CD4-positive, alpha-beta memory T cell (primary cell): ENCODE measurements at regions of chr4 and their contacts with region 1.

Region 1: GRCh38 chr4:112145326-112145819 is at the start of gene FAM241A:
- DNase-seq: peak; percentile 86 to 89 (median 86)
- H3K4me3 ChIP-seq: peak within 1 kb of the TSS; percentile 82 to 88
- H3K4me3 Mint-ChIP-seq: peak within 1 kb of the TSS; percentile 87 to 99 (median 94)
- H3K27ac ChIP-seq: peak within 1 kb of the TSS; percentile 82
- H3K27ac Mint-ChIP-seq: peak within 1 kb of the TSS; percentile 85 to 99 (median 96)
- H3K4me1 ChIP-seq: peaks cover 29% of the 10 kb centered on the region
- H3K4me1 Mint-ChIP-seq: peaks cover 22 to 34% (median 26%) of the 10 kb centered on the region in 4 donors
- H3K27me3 ChIP-seq: no peaks in the 10 kb centered on the region
- H3K27me3 Mint-ChIP-seq: no peaks in the 10 kb centered on the region
- total RNA-seq, gene FAM241A: 2.7 TPM

Region 2: GRCh38 chr4:112183252-112183651 is 37.9 kb after region 1 on chr4:
- CTCF ChIA-PET with region 1: no interaction called
- POLR2A ChIA-PET with region 1: no interaction called
- intact Hi-C with region 1: loop called (anchors 5 kb)
- DNase-seq: peak in 4 of 5 donors; percentile 9 to 38 (median 28)
- H3K4me3 ChIP-seq: no peak overlapping the region
- H3K4me3 Mint-ChIP-seq: peak overlapping the region in 5 of 8 donors; percentile 0 to 53 (median 27)
- H3K27ac ChIP-seq: no peak overlapping the region
- H3K27ac Mint-ChIP-seq: peak overlapping the region in 4 of 7 donors; percentile 22 to 77 (median 34)
- H3K4me1 ChIP-seq: peaks cover 23% of the 10 kb centered on the region
- H3K4me1 Mint-ChIP-seq: peaks cover 18 to 37% (median 28%) of the 10 kb centered on the region in 4 donors
- H3K27me3 ChIP-seq: no peaks in the 10 kb centered on the region
- H3K27me3 Mint-ChIP-seq: no peaks in the 10 kb centered on the region

Region 3: DNA sequence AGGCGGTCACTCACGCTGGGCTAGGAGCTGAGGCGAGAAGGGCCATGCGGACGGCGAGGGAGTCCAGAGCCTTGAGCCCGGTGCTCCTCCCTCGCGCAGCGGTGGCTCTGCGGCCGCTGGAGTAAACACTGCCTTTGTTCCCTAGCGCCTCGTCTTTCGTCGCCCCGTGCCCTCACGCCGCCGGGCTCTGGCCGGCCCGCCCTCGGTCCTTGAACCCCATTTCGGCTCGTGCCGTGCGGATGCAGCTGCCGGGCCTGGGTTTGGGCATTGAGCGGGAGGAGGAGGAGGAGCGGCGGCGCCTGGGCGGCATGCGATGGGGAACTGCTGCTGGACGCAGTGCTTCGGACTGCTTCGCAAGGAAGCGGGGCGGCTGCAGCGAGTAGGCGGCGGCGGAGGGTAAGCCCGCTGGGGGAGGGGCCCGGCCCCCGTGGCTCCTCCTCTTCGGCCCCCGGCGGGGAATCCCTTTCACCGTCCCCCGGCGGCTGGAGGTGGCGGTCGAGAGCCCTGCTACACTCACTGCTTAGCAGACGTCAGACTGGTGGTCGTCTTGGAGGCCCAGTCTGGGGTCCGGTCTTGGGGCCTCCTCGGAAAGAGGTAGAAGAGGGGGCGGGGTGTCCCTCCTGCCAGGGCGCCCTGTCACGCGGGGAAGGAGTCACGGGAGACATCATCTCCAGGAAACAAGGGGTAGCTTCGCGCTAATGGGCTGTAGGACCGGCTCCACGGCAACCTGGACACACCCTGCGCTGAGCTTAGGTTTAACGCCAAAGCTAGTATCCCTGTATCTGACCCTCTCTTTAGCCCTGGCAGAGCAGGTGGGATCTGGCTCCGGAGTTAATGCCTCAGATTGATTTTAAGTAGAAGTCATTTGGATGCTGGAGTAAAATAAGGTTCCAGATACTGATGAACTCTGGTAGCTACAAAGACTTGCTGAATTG is 86.7 kb after region 1 on chr4 and contains the start of gene AP1AR:
- CTCF ChIA-PET with region 1: interaction called, 4 read pairs
- POLR2A ChIA-PET with region 1: interaction called, 11 read pairs
- intact Hi-C with region 1: loop called (anchors 1 kb)
- DNase-seq: peak; percentile 77 to 86 (median 79)
- H3K4me3 ChIP-seq: peak within 1 kb of the TSS; percentile 84 to 90
- H3K4me3 Mint-ChIP-seq: peak within 1 kb of the TSS; percentile 93 to 99 (median 96)
- H3K27ac ChIP-seq: peak within 1 kb of the TSS; percentile 92
- H3K27ac Mint-ChIP-seq: peak within 1 kb of the TSS; percentile 98 to 100 (median 100)
- H3K4me1 ChIP-seq: peaks cover 40% of the 10 kb centered on the region
- H3K4me1 Mint-ChIP-seq: peaks cover 18 to 45% (median 26%) of the 10 kb centered on the region in 4 donors
- H3K27me3 ChIP-seq: no peaks in the 10 kb centered on the region
- H3K27me3 Mint-ChIP-seq: no peaks in the 10 kb centered on the region
- total RNA-seq, gene AP1AR: 20.3 to 22.8 TPM

Region 4: DNA sequence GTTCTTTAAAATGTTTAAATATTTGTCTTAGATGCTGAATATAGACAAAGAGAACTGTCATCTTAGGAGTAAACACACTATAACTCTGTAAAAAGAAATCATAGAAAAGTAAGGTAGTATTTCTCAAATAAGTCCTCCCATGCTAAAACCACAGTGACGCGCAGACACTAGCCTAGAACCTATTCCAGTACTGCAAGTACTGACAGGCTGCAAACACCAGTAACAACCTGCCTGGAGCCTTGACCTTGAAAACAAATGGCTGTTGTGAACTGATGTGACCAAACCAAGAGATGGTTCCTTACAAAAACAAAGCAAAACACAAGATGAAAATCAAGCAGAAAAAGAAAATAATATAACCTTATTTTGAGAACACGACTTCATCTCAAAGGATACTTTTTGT is 131.8 kb after region 1 on chr4:
- CTCF ChIA-PET with region 1: no interaction called
- POLR2A ChIA-PET with region 1: no interaction called
- intact Hi-C with region 1: no loop called
- DNase-seq: no peak
- H3K4me3 ChIP-seq: no peak overlapping the region
- H3K4me3 Mint-ChIP-seq: peak overlapping the region in 1 of 8 donors; percentile 33
- H3K27ac ChIP-seq: no peak overlapping the region
- H3K27ac Mint-ChIP-seq: peak overlapping the region in 6 of 7 donors; percentile 26 to 81 (median 60)
- H3K4me1 ChIP-seq: peaks cover 44% of the 10 kb centered on the region
- H3K4me1 Mint-ChIP-seq: peaks cover 31 to 78% (median 56%) of the 10 kb centered on the region in 4 donors
- H3K27me3 ChIP-seq: no peaks in the 10 kb centered on the region
- H3K27me3 Mint-ChIP-seq: no peaks in the 10 kb centered on the region

Region 5: GRCh38 chr4:112302320-112303274 is 157.2 kb after region 1 on chr4:
- CTCF ChIA-PET with region 1: no interaction called
- POLR2A ChIA-PET with region 1: no interaction called
- intact Hi-C with region 1: loop called (anchors 5 kb)
- DNase-seq: peak in 3 of 5 donors; percentile 30 to 40 (median 33)
- H3K4me3 ChIP-seq: peak overlapping the region in 1 of 2 donors; percentile 6
- H3K4me3 Mint-ChIP-seq: no peak overlapping the region
- H3K27ac ChIP-seq: peak overlapping the region; percentile 45
- H3K27ac Mint-ChIP-seq: no peak overlapping the region
- H3K4me1 ChIP-seq: peaks cover 46% of the 10 kb centered on the region
- H3K4me1 Mint-ChIP-seq: peaks cover 14 to 27% (median 18%) of the 10 kb centered on the region in 4 donors
- H3K27me3 ChIP-seq: no peaks in the 10 kb centered on the region
- H3K27me3 Mint-ChIP-seq: no peaks in the 10 kb centered on the region

Region 6: DNA sequence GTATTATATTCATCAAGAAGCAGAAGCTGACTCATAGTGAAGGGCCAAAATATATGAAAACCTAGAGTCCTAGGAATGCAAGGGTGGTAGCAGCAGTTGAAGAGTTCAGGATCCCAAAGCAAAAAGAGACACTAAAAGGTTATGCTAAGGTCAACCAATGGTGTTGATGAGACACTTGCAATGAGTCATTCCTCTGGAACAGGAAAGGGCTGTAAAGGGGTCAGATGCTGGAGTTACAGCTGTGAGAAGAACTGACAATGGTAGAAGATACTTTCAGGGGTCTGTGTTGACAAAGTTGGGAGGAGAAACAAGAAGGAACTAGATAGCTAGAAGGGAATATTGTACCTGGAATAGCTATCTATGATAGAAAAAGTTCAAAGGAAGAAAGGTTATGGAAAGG is 443.8 kb after region 1 on chr4:
- CTCF ChIA-PET with region 1: no interaction called
- POLR2A ChIA-PET with region 1: no interaction called
- intact Hi-C with region 1: no loop called
- DNase-seq: no peak
- H3K4me3 ChIP-seq: no peak overlapping the region
- H3K4me3 Mint-ChIP-seq: no peak overlapping the region
- H3K27ac ChIP-seq: no peak overlapping the region
- H3K27ac Mint-ChIP-seq: no peak overlapping the region
- H3K4me1 ChIP-seq: no peaks in the 10 kb centered on the region
- H3K4me1 Mint-ChIP-seq: no peaks in the 10 kb centered on the region
- H3K27me3 ChIP-seq: no peaks in the 10 kb centered on the region
- H3K27me3 Mint-ChIP-seq: no peaks in the 10 kb centered on the region